Transverse colon (tissue), 4 donors: ENCODE measurements at regions of chr4 and their contacts with region 1.

Region 1: DNA sequence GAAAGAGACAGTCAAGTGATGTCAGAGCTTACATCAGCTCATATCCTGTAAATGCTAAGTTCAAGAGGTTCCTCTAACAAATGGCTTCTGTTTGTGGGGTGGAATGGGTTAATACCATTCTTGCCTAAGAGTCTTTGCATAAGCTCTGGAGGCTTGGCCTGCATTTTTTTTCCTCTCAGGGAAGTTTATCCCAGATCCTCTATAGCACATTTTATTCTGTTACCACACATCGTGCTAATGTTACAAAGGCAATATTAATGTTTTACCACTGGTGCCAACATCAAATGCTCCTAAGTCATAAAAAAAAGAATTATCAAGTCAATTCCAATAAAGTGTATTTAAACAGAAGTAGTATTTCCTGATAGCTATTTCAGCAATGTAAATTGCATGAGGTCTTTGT is 2.9 kb upstream of the ADH6 start:
- DNase-seq: no peak
- H3K4me3 ChIP-seq: no peak overlapping the region
- H3K27ac ChIP-seq: peak overlapping the region in 3 of 4 donors; percentile 4 to 26 (median 15)
- H3K4me1 ChIP-seq: peaks cover 8 to 31% (median 14%) of the 10 kb centered on the region in 4 donors
- H3K27me3 ChIP-seq: no peaks in the 10 kb centered on the region
- CTCF ChIP-seq: no peak
- EP300 ChIP-seq: no peak
- POLR2A ChIP-seq: no peak

Region 2: DNA sequence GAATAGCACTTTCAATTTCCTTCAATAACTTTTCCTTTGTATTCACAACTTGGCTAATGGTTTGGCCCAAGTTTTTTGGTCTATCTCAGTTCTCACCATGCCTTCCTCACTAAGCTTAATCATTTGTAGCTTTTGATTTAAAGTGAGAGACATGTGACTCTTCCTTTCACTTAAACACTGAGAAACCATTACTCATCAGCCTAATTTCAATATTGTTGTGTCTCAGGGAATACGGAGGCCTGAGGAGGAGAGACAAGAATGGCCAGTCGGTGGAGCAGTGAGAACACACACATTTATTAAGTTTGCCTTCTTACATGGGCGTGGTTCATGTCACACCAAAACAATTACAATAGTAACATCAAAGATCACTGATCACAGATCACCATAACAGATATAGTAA is 620.3 kb before region 1 on chr4:
- in situ Hi-C with region 1: no loop called
- intact Hi-C with region 1: loop called (anchors 10 kb)
- DNase-seq: no peak
- H3K4me3 ChIP-seq: no peak overlapping the region
- H3K27ac ChIP-seq: no peak overlapping the region
- H3K4me1 ChIP-seq: no peaks in the 10 kb centered on the region
- H3K27me3 ChIP-seq: no peaks in the 10 kb centered on the region
- CTCF ChIP-seq: no peak
- EP300 ChIP-seq: no peak
- POLR2A ChIP-seq: no peak

Region 3: GRCh38 chr4:98720871-98721480 is 501.0 kb before region 1 on chr4:
- in situ Hi-C with region 1: no loop called
- intact Hi-C with region 1: no loop called
- DNase-seq: no peak
- H3K4me3 ChIP-seq: no peak overlapping the region
- H3K27ac ChIP-seq: no peak overlapping the region
- H3K4me1 ChIP-seq: no peaks in the 10 kb centered on the region
- H3K27me3 ChIP-seq: no peaks in the 10 kb centered on the region
- CTCF ChIP-seq: no peak
- EP300 ChIP-seq: no peak
- POLR2A ChIP-seq: no peak